ENCODE measurements at regions of chr2 and their contacts with region 1.

Region 1: DNA sequence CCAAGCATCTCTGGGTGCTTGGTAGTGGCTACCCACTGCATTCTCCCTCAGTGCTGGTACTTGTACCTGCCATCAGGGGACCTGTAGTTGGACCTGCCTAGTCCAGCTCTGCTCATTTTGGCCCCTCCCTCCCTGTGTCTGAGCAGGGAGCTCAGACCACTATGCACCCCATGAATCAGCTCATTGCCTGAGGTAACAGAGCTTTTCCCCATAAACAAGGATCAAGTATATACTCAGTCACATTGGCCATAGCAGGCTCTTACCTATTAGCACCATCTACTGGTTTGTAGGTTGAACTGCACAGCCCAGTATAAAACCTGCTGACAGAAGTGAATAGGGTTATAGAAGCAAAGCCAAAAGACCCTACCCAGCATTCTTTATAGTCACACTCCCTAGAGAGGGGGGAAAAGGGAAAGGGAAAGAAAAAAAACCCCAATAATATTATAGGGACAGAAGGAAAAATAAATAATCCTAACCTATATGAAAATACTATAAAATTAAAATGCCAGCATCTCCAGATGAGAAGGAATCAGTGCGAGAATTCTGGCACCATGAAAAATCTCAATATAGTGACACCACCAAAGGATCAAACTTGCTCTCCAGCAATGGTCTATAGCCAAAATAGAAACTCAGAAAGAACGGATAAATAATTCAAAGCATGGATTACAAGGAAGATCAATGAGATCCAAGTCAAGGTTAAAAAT is 6.9 kb upstream of the FLACC1 start:
- DNase-seq: peak; percentile 74

Region 2: GRCh38 chr2:200963124-200963917 is 400.7 kb before region 1 on chr2 and contains the start of gene ORC2:
- in situ Hi-C with region 1: no loop called
- DNase-seq: peak; percentile 97

Region 3: GRCh38 chr2:201257956-201258665 is 105.9 kb before region 1 on chr2:
- in situ Hi-C with region 1: loop called (anchors 25 kb)
- DNase-seq: peak; percentile 97

Region 4: GRCh38 chr2:202149155-202149762 is 785.2 kb after region 1 on chr2:
- in situ Hi-C with region 1: no loop called
- DNase-seq: peak; percentile 54